RWPE1 (cell line): ENCODE measurements at regions of chr3 and their contacts with region 1.

Region 1: DNA sequence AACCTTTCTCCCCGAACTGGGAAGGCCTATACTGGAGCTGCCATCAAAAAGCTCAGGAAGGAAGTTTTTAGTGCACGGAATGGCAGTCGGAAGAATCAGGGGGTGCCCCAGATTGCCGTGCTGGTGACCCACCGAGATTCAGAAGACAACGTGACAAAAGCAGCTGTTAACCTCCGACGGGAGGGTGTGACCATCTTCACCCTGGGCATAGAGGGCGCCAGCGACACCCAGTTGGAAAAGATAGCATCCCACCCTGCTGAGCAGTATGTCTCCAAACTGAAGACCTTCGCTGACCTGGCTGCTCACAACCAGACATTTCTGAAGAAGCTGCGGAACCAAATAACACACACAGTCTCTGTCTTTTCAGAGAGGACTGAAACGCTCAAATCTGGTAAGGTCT is 48.2 kb downstream of the COL6A6 start:
- DNase-seq: no peak
- H3K27ac ChIP-seq: no peak overlapping the region
- CTCF ChIP-seq: no peak

Region 2: DNA sequence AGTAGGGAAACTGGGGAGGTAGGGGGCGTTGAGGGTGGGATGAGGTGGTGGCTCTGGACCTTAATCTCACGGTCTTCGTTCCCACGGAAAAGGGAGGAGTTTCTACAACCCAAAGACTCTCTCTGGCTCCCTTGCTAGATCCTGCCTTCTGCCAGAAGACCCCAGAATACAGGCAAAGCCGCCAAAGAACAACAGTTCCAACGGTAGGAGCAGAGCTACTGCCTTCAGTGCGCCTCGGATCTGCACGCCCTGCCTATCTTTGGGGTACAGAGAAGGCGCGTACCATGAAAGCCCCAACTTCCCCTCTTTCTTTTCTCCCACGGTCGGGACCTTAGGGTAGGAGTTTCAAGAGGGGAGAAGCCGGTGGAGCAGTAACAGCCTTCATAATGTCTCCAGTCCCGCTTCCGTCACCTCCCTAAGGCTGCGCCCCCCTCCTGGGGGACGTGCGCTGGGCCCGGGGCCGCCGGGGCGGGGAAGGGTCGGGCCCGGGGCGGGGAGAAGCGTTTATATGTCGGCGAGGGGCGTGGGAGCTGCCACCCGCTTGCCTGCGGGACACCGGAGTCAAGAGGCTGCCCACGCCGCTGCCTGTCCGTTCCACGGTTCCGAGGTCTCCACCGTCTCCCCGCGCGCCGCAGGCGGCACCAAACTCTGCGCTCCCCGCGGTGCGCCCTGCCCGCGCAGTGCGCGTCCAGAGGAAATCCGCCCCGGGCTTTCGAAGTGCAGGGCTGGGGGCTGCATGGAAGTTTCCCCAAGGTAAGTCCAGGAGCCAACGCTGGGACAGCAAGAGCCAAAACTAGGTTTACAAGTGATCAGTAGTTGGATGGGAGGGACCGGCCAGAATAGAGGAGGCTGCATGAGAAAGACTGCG is 48.3 kb before region 1 on chr3 and contains the start of gene COL6A6:
- CTCF ChIA-PET with region 1: no interaction called
- POLR2A ChIA-PET with region 1: no interaction called
- DNase-seq: no peak
- H3K27ac ChIP-seq: no peak within 1 kb of the TSS
- CTCF ChIP-seq: no peak

Region 3: DNA sequence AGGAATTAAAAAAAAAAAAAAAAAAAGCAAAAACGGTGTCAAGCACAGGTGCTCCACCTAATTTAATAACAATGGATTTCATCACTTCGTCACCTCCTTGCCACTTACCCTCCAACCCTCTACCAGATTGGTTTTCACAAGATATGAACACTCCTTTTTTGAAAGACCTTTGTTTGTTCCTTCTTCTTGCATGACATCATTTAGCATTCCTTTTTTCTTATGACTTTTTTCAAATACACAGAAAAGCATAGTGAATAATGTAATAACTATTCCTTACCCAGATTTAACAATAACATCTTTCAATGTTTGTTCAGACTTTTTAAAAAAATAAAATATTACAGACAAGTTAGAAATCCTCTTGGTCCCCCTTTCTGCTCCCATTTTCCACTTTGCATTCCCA is 32.0 kb before region 1 on chr3:
- CTCF ChIA-PET with region 1: interaction called, 10 read pairs
- POLR2A ChIA-PET with region 1: no interaction called
- DNase-seq: no peak
- H3K27ac ChIP-seq: no peak overlapping the region
- CTCF ChIP-seq: no peak